Activated CD4-positive, alpha-beta T cell treated with anti-CD3 and anti-CD28 coated beads for 36 hours (primary cell): ENCODE measurements at regions of chr19 and their contacts with region 1.

Region 1: DNA sequence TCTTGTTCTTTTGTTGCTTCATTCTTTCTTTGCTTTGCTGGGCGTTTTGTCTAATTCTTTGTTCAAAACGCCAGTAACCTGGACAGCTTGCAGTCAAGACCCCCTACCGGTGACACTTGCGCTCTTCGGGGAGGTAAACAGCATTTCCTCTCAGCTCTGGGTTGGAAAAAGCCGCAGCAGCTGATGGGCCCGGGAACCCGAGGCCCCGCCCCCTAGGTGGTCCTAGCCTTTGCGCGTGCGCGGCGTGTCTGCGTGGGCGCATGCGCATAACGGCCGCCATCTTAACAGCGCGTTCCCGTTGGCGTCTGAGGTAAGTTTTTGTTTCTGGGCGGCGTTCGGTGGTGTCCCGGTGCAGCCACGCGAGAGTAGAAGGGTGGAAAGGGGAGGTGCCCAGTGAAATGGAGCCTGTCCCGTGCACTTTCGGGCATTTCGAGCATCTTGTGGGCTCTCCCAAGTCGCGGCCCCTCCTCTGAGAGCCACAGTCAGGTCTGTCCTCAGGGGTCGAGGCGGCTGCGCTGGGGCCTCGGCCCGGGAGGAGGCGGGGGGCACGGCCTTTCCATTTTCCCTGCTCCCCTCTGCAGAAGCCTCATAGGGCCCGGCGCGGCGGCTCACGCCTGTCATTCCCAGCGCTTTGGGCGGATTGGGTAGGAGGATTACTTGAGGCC is at the start of gene ZNF559:
- DNase-seq: peak; percentile 97
- ATAC-seq: peak; percentile 99
- H3K4me3 Mint-ChIP-seq: peak within 1 kb of the TSS; percentile 84
- H3K27ac Mint-ChIP-seq: peak within 1 kb of the TSS; percentile 96
- H3K4me1 Mint-ChIP-seq: peaks cover 23% of the 10 kb centered on the region
- H3K27me3 Mint-ChIP-seq: no peaks in the 10 kb centered on the region
- total RNA-seq, gene ZNF559: 11.7 to 13.0 TPM

Region 2: GRCh38 chr19:9309139-9309973 is 14.7 kb before region 1 on chr19 and contains the start of gene ZNF699:
- CTCF ChIA-PET with region 1: interaction called, 6 read pairs
- POLR2A ChIA-PET with region 1: no interaction called
- intact Hi-C with region 1: loop called (anchors 1 kb)
- DNase-seq: peak; percentile 100
- ATAC-seq: peak; percentile 90
- H3K4me3 Mint-ChIP-seq: peak within 1 kb of the TSS; percentile 97
- H3K27ac Mint-ChIP-seq: peak within 1 kb of the TSS; percentile 97
- H3K4me1 Mint-ChIP-seq: peaks cover 13% of the 10 kb centered on the region
- H3K27me3 Mint-ChIP-seq: no peaks in the 10 kb centered on the region
- total RNA-seq, gene ZNF699: 6.7 to 7.1 TPM

Region 3: GRCh38 chr19:9435279-9436268 is 111.5 kb after region 1 on chr19 and contains the start of gene ZNF266:
- CTCF ChIA-PET with region 1: no interaction called
- POLR2A ChIA-PET with region 1: no interaction called
- intact Hi-C with region 1: loop called (anchors 1 to 10 kb)
- DNase-seq: peak; percentile 97
- ATAC-seq: peak; percentile 91
- H3K4me3 Mint-ChIP-seq: peak within 1 kb of the TSS; percentile 95
- H3K27ac Mint-ChIP-seq: peak within 1 kb of the TSS; percentile 99
- H3K4me1 Mint-ChIP-seq: peaks cover 33% of the 10 kb centered on the region
- H3K27me3 Mint-ChIP-seq: no peaks in the 10 kb centered on the region
- total RNA-seq, gene ZNF266: 17.1 to 22.4 TPM

Region 4: DNA sequence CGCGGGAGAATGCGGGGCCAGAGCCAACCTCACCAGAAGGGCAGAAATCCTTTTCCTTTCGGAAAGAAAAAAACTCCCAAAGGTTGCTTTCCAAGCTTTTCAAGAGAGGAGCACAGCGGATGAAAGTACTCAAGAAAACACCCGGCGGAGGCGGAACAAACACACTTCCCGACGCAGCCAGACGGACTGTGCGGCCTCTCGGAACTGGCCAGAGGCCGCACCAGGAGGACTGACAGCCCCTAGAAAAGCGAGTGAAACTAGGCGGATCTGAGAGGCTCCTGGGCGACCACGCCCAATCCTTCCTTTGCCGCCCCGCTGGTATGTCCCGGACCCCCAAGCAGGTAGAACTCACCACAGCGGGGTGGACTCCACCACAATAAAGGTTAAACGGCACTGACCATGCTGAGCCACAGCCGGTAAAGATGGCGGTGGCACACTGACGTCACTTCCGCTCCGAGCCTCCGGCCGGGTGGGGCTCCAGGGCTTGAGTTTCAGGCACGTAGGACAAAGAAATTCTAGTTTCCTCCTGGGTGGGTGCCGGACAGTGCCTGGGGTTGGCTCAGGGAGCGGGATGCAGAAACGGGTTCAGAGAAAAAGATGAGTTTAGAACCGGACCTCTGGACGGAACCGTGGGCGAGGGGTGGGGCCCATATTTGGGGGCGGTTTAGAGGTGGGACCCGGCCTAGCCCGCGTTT is 350.8 kb after region 1 on chr19 and contains the start of gene ZNF562:
- CTCF ChIA-PET with region 1: no interaction called
- POLR2A ChIA-PET with region 1: no interaction called
- intact Hi-C with region 1: loop called in 1 of 2 experiments (anchors 1 kb)
- DNase-seq: peak; percentile 91
- ATAC-seq: peak; percentile 78
- H3K4me3 Mint-ChIP-seq: peak within 1 kb of the TSS; percentile 94
- H3K27ac Mint-ChIP-seq: peak within 1 kb of the TSS; percentile 97
- H3K4me1 Mint-ChIP-seq: peaks cover 30% of the 10 kb centered on the region
- H3K27me3 Mint-ChIP-seq: no peaks in the 10 kb centered on the region
- total RNA-seq, gene ZNF562: 29.9 to 39.7 TPM

Region 5: GRCh38 chr19:9818734-9819589 is 494.9 kb after region 1 on chr19 and contains the start of gene FBXL12:
- CTCF ChIA-PET with region 1: no interaction called
- POLR2A ChIA-PET with region 1: no interaction called
- intact Hi-C with region 1: loop called in 1 of 2 experiments (anchors 1 kb)
- DNase-seq: peak; percentile 100
- ATAC-seq: peak; percentile 92
- H3K4me3 Mint-ChIP-seq: peak within 1 kb of the TSS; percentile 88
- H3K27ac Mint-ChIP-seq: peak within 1 kb of the TSS; percentile 90
- H3K4me1 Mint-ChIP-seq: peaks cover 26% of the 10 kb centered on the region
- H3K27me3 Mint-ChIP-seq: no peaks in the 10 kb centered on the region
- total RNA-seq, gene FBXL12: 19.9 to 22.5 TPM